Activated T-helper 2 cell treated with anti-CD3 and anti-CD28 coated beads, Interferon-gamma antibody, Interleukin-2, Interleukin-4, amounts not matched to agents 10 μg/mL and 5 μg/mL and 100 μg/mL, durations not matched to agents 14 hours and 24 hours and 36 hours (primary cell): ENCODE measurements at regions of chr10 and their contacts with region 1.

Region 1: DNA sequence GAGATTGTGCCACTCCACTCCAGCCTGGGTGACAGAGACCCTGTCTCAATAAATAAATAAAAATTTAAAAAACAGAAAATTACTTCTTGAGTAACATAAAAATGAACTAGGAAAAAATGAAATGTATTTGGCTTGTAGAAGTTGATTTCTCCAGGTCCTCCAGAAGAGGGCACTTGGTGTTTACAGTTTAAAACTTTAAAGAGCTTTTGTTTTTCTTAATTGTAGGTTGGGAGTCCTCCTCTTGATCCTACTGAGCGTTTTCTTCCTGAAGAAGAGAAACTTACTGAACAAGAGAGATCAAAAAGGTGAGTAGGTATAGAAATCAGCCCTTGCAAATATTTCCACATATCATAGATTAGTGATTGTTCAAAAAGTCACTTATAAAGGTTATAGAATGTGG is 16.2 kb downstream of the KIFBP start:
- DNase-seq: no peak
- H3K4me3 Mint-ChIP-seq: no peak overlapping the region
- H3K27ac Mint-ChIP-seq: no peak overlapping the region
- H3K4me1 Mint-ChIP-seq: peaks cover 10% of the 10 kb centered on the region
- H3K27me3 Mint-ChIP-seq: no peaks in the 10 kb centered on the region

Region 2: GRCh38 chr10:69045441-69046300 is 40.9 kb after region 1 on chr10:
- intact Hi-C with region 1: loop called (anchors 5 kb)
- DNase-seq: peak; percentile 49
- H3K4me3 Mint-ChIP-seq: peak overlapping the region; percentile 70
- H3K27ac Mint-ChIP-seq: peak overlapping the region; percentile 100
- H3K4me1 Mint-ChIP-seq: peaks cover 49% of the 10 kb centered on the region
- H3K27me3 Mint-ChIP-seq: no peaks in the 10 kb centered on the region

Region 3: DNA sequence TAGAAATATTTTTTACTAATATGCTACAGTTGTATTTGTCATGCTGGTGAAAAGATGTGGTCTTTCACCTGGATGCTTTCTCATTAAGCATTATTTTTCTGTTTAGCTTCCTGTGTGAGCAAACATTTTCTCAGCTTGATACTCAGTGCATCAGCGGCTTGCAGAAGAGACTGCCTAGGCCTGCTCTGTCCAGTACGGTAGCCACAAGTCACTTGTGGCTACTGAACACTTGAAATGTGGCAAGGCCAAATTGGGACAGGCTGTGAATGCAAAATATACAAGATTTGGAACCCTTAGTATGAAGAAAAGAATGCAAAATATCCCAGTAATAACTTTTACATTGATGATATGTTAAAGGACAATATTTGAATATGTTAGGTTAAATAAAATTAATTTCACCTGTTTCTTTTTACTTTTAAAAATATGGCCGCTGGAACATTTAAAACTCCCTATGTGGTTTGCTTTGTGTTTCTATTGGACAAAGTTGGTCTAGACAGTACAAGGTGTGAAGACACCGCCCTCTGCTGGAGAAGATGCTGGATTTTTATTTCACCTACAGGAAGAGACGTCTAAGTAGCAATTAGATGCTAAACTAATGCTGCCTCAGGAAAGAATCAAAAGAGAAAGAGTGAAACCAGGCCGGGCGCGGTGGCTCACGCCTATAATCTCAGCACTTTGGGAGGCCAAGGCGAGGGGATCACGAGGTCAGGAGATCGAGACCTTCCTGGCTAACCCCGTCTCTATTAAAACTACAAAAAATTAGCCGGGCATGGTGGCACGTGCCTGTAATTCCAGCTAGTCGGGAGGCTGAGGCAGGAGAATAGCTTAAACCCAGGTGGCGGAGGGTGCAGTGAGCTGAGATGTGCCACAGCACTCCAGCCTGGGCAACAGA is 88.4 kb after region 1 on chr10:
- intact Hi-C with region 1: loop called (anchors 1 kb)
- DNase-seq: peak; percentile 78
- H3K4me3 Mint-ChIP-seq: peak overlapping the region; percentile 59
- H3K27ac Mint-ChIP-seq: peak overlapping the region; percentile 62
- H3K4me1 Mint-ChIP-seq: peaks cover 43% of the 10 kb centered on the region
- H3K27me3 Mint-ChIP-seq: no peaks in the 10 kb centered on the region

Region 4: GRCh38 chr10:69123747-69124562 is 119.1 kb after region 1 on chr10 and contains the start of gene VPS26A:
- intact Hi-C with region 1: loop called (anchors 1 kb)
- DNase-seq: peak; percentile 98
- H3K4me3 Mint-ChIP-seq: peak within 1 kb of the TSS; percentile 94
- H3K27ac Mint-ChIP-seq: peak within 1 kb of the TSS; percentile 86
- H3K4me1 Mint-ChIP-seq: peaks cover 21% of the 10 kb centered on the region
- H3K27me3 Mint-ChIP-seq: no peaks in the 10 kb centered on the region
- total RNA-seq, gene VPS26A: 28.4 and 31.1 TPM in 2 replicates

Region 5: DNA sequence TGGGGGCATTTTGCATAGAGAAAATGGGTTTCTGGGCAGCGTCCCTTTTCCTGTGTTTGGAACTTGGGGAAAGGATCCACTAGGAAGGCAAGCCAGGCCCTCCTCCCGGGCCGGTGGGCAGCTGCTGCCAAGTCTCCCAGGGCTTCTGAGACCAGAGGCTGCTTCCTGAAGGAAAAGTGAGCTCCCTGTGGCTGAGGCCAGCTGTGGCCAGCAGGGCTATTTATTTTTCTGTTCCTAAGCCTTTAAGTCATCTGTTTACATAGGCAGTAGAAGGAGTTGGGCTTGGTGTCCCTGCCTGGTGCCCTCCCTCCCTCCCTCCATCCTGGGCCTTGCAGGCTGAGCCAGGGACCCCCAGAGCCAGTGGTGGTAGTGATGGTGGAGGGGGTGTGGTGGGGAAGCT is 726.4 kb after region 1 on chr10:
- intact Hi-C with region 1: no loop called
- DNase-seq: no peak
- H3K4me3 Mint-ChIP-seq: no peak overlapping the region
- H3K27ac Mint-ChIP-seq: no peak overlapping the region
- H3K4me1 Mint-ChIP-seq: peaks cover 28% of the 10 kb centered on the region
- H3K27me3 Mint-ChIP-seq: peaks cover 8% of the 10 kb centered on the region